Activated T-helper 2 cell treated with anti-CD3 and anti-CD28 coated beads, Interferon-gamma antibody, Interleukin-2, Interleukin-4, amounts not matched to agents 10 μg/mL and 5 μg/mL and 100 μg/mL, durations not matched to agents 14 hours and 24 hours and 36 hours (primary cell): ENCODE measurements at regions of chr2 and their contacts with region 1.

Region 1: DNA sequence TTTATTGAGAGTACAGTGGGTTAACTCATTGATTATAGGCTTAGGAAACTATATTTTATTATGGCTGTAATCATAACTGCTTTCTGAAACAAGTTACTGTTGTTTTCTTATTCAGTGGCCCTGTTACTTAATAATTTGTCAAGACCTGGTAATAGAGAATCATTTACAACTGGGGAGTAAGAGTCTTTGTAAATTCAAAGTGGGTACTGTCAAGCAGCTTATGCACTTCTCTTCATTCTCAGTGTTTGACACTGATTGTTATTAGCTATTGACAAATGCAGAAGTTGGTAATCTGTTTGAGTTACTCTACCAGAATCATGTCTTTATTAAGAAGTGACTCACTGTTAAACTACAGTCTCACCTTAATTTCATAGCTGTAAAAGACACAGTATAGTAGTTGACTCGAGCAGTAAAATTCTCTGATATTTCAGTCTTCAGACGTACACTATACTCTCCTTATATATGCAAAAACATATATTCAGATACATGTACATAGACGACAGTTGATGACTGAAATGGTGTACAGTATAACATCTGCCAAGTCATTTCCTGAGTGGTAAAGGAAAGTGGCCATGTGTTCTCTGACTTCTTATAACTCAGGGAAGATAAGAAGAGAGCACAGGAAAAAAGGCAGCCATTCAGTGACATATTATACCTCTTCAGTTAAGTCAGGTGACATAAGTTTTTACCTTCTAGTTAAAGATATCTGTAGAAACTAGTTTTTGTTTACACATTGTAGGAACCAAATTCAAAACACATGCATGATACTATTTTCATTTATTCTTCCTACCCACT is 36.0 kb upstream of the TTC27 start:
- DNase-seq: no peak
- H3K4me3 Mint-ChIP-seq: peak overlapping the region; percentile 49
- H3K27ac Mint-ChIP-seq: peak overlapping the region; percentile 88
- H3K4me1 Mint-ChIP-seq: peaks cover 44% of the 10 kb centered on the region
- H3K27me3 Mint-ChIP-seq: no peaks in the 10 kb centered on the region

Region 2: GRCh38 chr2:32627814-32628579 is 36.1 kb after region 1 on chr2 and contains the start of gene TTC27:
- intact Hi-C with region 1: loop called (anchors 2 kb)
- DNase-seq: peak; percentile 93
- H3K4me3 Mint-ChIP-seq: peak within 1 kb of the TSS; percentile 95
- H3K27ac Mint-ChIP-seq: peak within 1 kb of the TSS; percentile 95
- H3K4me1 Mint-ChIP-seq: peaks cover 27% of the 10 kb centered on the region
- H3K27me3 Mint-ChIP-seq: no peaks in the 10 kb centered on the region
- total RNA-seq, gene TTC27: 38.8 and 44.9 TPM in 2 replicates